ENCODE measurements at regions of chrX and their contacts with region 1.

Region 1: GRCh38 chrX:141917801-141918200 is 14.1 kb downstream of the MAGEC1 start:
- DNase-seq: no peak
- ATAC-seq: no peak
- H3K4me3 ChIP-seq: no peak overlapping the region
- H3K27ac ChIP-seq: no peak overlapping the region
- H3K4me1 ChIP-seq: no peaks in the 10 kb centered on the region
- H3K27me3 ChIP-seq: no peaks in the 10 kb centered on the region
- CTCF ChIP-seq: no peak
- EP300 ChIP-seq: no peak
- POLR2A ChIP-seq: no peak
- RAD21 ChIP-seq: no peak

Region 2: GRCh38 chrX:142186103-142186502 is 268.3 kb after region 1 on chrX:
- CTCF ChIA-PET with region 1: no interaction called
- POLR2A ChIA-PET with region 1: no interaction called
- in situ Hi-C with region 1: loop called (anchors 10 kb)
- intact Hi-C with region 1: no loop called
- DNase-seq: no peak
- ATAC-seq: no peak
- H3K4me3 ChIP-seq: no peak overlapping the region
- H3K27ac ChIP-seq: no peak overlapping the region
- H3K4me1 ChIP-seq: no peaks in the 10 kb centered on the region
- H3K27me3 ChIP-seq: no peaks in the 10 kb centered on the region
- CTCF ChIP-seq: no peak
- EP300 ChIP-seq: no peak
- POLR2A ChIP-seq: no peak
- RAD21 ChIP-seq: no peak

Region 3: GRCh38 chrX:142233400-142233799 is 315.6 kb after region 1 on chrX:
- CTCF ChIA-PET with region 1: no interaction called
- POLR2A ChIA-PET with region 1: no interaction called
- in situ Hi-C with region 1: no loop called
- intact Hi-C with region 1: no loop called
- DNase-seq: no peak
- ATAC-seq: no peak
- H3K4me3 ChIP-seq: no peak overlapping the region
- H3K27ac ChIP-seq: no peak overlapping the region
- H3K4me1 ChIP-seq: no peaks in the 10 kb centered on the region
- H3K27me3 ChIP-seq: no peaks in the 10 kb centered on the region
- CTCF ChIP-seq: no peak
- EP300 ChIP-seq: no peak
- POLR2A ChIP-seq: no peak
- RAD21 ChIP-seq: no peak